ENCODE measurements at regions of chr2 and their contacts with region 1.

Region 1: GRCh38 chr2:70871398-70872211 is 36.0 kb upstream of the CD207 start:
- DNase-seq: peak; percentile 80 to 99 (median 92)
- ATAC-seq: peak; percentile 97 to 100 (median 100)
- H3K4me3 ChIP-seq: peak overlapping the region in 1 of 4 donors; percentile 17
- H3K27ac ChIP-seq: no peak overlapping the region
- H3K4me1 ChIP-seq: no peaks in the 10 kb centered on the region
- H3K27me3 ChIP-seq: no peaks in the 10 kb centered on the region
- CTCF ChIP-seq: peak; percentile 79 to 91 (median 86)

Region 2: DNA sequence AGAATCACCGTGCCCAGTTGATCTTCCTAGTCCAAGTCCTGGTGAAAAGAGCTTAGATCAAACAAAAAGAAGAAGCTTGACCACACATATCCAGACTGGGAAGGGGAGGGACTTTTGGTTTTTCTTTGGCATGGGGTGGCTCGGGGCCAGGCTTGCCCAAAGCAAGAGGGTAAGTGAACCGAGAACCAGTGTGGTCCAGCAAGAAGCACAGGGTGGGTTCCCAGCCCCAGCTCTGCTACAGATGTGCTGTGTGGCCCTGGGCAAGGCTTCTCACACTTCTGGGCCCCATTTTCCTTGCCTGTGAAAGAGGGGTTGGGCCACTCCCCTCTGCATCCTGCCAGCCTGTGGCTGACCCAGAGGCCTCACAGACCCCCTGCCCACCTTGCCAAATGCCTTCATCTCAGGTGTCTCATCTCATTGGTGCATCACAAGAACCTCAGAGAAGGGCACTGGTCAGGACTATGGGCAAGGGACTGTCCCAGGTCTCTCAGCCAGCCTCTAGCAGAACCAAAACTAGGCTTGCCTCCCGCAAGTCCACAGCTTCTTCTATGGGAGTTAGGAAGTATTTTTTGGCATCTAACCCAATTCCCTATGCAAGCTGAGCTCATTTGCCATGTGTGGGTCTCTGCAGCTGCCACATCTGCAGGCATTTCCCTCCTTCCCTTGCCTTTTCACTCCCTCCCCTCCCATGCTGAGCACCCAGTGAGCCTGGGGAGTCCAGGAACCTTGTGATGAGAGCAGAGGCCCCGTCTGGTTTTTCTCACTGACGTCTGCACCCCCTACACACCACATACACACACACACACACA is 71.0 kb after region 1 on chr2:
- intact Hi-C with region 1: loop called in 2 of 3 experiments (anchors 5 kb)
- DNase-seq: no peak
- ATAC-seq: no peak
- H3K4me3 ChIP-seq: no peak overlapping the region
- H3K27ac ChIP-seq: no peak overlapping the region
- H3K4me1 ChIP-seq: no peaks in the 10 kb centered on the region
- H3K27me3 ChIP-seq: no peaks in the 10 kb centered on the region
- CTCF ChIP-seq: no peak

Region 3: DNA sequence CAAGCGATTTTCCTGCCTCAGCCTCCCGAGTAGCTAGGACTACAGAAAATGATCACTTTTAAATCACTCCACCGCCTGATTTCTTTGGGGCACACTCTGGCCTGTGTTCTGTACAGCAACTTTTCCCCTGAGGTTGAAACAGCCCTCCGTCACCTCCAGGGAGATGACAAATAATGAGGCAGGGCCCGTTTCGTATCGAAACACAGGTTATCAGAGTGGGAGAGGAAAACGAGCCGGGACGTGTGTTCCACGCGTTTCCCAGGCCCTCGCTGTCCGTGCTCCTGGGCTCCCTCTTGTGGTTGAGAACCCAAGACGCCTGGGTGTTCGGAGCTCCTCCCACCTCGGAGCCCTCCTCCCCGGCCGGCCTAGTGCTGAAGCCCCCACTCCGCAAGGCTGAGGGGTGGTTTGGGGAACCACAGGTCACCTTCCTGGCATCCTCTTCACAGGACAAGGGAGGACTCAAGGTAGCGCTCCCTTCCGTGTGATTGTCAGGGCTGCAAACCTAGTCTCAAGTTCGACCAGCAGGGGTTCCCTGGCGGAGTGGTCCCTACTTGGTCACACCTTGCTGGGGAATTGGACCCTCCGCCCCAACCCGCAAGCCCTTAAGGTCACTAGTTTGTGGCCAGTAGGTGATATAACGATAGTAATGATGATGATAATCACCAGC is 76.9 kb after region 1 on chr2:
- intact Hi-C with region 1: loop called in 2 of 3 experiments (anchors 5 kb)
- DNase-seq: peak; percentile 71 to 91 (median 84)
- ATAC-seq: peak; percentile 89 to 99 (median 96)
- H3K4me3 ChIP-seq: peak overlapping the region in 2 of 4 donors; percentile 9 to 39
- H3K27ac ChIP-seq: no peak overlapping the region
- H3K4me1 ChIP-seq: no peaks in the 10 kb centered on the region
- H3K27me3 ChIP-seq: no peaks in the 10 kb centered on the region
- CTCF ChIP-seq: peak; percentile 70 to 88 (median 74)